IMR-90 (cell line): ENCODE measurements at regions of chr1 and their contacts with region 1.

Region 1: GRCh38 chr1:72253132-72253531 is 29.2 kb downstream of the NEGR1 start:
- DNase-seq: no peak
- ATAC-seq: no peak
- H3K4me3 ChIP-seq: no peak overlapping the region
- H3K27ac ChIP-seq: no peak overlapping the region
- H3K4me1 ChIP-seq: no peaks in the 10 kb centered on the region
- H3K27me3 ChIP-seq: no peaks in the 10 kb centered on the region
- CTCF ChIP-seq: no peak
- POLR2A ChIP-seq: no peak
- RAD21 ChIP-seq: no peak

Region 2: GRCh38 chr1:71080739-71081696 is 1172.1 kb before region 1 on chr1 and contains the start of gene ZRANB2:
- CTCF ChIA-PET with region 1: no interaction called
- POLR2A ChIA-PET with region 1: no interaction called
- dilution Hi-C with region 1: no loop called
- in situ Hi-C with region 1: loop called (anchors 25 kb)
- intact Hi-C with region 1: no loop called
- DNase-seq: peak; percentile 95
- ATAC-seq: peak; percentile 97
- H3K4me3 ChIP-seq: peak within 1 kb of the TSS; percentile 81
- H3K27ac ChIP-seq: peak within 1 kb of the TSS; percentile 84
- H3K4me1 ChIP-seq: peaks cover 5% of the 10 kb centered on the region
- H3K27me3 ChIP-seq: no peaks in the 10 kb centered on the region
- CTCF ChIP-seq: peak; percentile 87
- POLR2A ChIP-seq: peak; percentile 94
- RAD21 ChIP-seq: no peak
- total RNA-seq, gene ZRANB2: 23.7 and 41.7 TPM in 2 replicates

Region 3: DNA sequence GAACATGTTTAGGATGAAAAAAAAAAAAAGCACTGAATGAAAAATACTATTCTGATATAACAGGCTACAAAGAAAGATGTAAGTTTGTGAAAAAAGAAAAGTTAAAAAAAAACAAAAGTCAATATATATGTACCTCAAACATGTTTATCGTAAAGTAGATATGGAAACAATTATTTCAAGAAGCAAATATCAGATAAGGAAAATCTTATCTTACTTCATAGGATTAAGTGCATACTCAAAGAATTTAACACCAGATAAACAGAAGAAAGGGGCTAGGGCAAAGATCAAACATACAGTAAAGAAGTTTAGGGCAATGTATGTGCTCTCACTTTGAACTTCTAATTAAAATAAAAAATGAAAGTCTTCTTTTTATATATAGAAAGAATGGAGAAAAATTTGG is 46.1 kb before region 1 on chr1:
- CTCF ChIA-PET with region 1: no interaction called
- POLR2A ChIA-PET with region 1: no interaction called
- dilution Hi-C with region 1: no loop called
- in situ Hi-C with region 1: no loop called
- intact Hi-C with region 1: loop called (anchors 5 kb)
- DNase-seq: no peak
- ATAC-seq: no peak
- H3K4me3 ChIP-seq: no peak overlapping the region
- H3K27ac ChIP-seq: no peak overlapping the region
- H3K4me1 ChIP-seq: no peaks in the 10 kb centered on the region
- H3K27me3 ChIP-seq: no peaks in the 10 kb centered on the region
- CTCF ChIP-seq: no peak
- POLR2A ChIP-seq: no peak
- RAD21 ChIP-seq: no peak